Colonic mucosa (tissue), 4 donors: ENCODE measurements at regions of chr7 and their contacts with region 1.

Region 1: GRCh38 chr7:81499262-81500116 is 270.4 kb downstream of the HGF start:
- DNase-seq: no peak
- H3K4me3 ChIP-seq: no peak overlapping the region
- H3K27ac ChIP-seq: no peak overlapping the region
- H3K4me1 ChIP-seq: no peaks in the 10 kb centered on the region
- H3K27me3 ChIP-seq: no peaks in the 10 kb centered on the region
- CTCF ChIP-seq: peak; percentile 57

Region 2: DNA sequence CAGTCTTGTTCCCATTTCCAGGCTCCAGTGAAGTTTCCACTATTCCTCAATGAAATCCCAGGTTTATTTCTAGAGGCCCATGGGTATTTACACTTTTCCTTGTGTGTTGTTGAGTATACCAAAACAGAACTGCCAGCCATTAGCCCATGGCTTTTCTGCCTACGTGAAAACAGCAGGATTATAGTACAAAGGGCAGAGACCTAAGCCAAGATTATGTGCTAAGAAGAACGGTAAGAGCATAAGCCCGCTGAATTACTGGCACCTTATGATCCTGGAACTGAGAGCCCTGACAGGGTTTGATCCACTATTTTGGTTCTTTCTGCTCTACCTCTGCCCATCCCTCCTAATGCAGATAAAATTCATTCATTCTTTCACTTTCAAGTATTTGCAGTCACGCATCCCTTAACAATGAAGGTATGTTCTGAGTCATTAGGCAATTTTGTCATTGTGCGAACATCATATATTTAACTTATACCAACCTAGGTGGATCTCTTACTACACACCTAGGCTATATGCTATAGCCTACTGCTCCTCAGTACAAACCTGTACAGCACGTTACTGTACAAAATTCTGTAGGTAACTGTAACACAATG is 596.7 kb before region 1 on chr7:
- intact Hi-C with region 1: no loop called
- DNase-seq: no peak
- H3K4me3 ChIP-seq: no peak overlapping the region
- H3K27ac ChIP-seq: no peak overlapping the region
- H3K4me1 ChIP-seq: no peaks in the 10 kb centered on the region
- H3K27me3 ChIP-seq: no peaks in the 10 kb centered on the region
- CTCF ChIP-seq: no peak

Region 3: DNA sequence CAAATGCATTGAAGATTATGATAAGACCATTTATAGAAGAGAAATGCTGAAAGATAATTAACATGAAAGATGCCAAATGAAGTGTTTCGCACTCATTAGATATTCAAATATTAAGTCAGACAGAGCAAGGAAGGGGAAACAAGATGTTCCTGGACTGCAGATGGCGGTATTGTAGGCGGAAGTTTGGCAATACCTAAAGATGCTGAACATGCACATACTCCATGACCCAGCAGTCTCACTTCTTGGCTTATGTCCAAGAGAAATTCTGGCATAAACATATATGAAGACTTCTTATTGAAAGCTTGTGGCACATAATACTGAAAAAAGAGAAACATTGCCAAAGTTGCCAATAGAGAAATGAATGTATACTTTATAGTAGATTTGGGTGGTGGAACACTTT is 255.3 kb before region 1 on chr7:
- intact Hi-C with region 1: no loop called
- DNase-seq: no peak
- H3K4me3 ChIP-seq: no peak overlapping the region
- H3K27ac ChIP-seq: no peak overlapping the region
- H3K4me1 ChIP-seq: no peaks in the 10 kb centered on the region
- H3K27me3 ChIP-seq: no peaks in the 10 kb centered on the region
- CTCF ChIP-seq: no peak

Region 4: GRCh38 chr7:81684513-81685269 is 185.2 kb after region 1 on chr7:
- intact Hi-C with region 1: no loop called
- DNase-seq: peak; percentile 75
- H3K4me3 ChIP-seq: no peak overlapping the region
- H3K27ac ChIP-seq: no peak overlapping the region
- H3K4me1 ChIP-seq: no peaks in the 10 kb centered on the region
- H3K27me3 ChIP-seq: no peaks in the 10 kb centered on the region
- CTCF ChIP-seq: no peak

Region 5: GRCh38 chr7:81956520-81956919 is 457.0 kb after region 1 on chr7:
- intact Hi-C with region 1: loop called (anchors 5 kb)
- DNase-seq: no peak
- H3K4me3 ChIP-seq: no peak overlapping the region
- H3K27ac ChIP-seq: no peak overlapping the region
- H3K4me1 ChIP-seq: no peaks in the 10 kb centered on the region
- H3K27me3 ChIP-seq: no peaks in the 10 kb centered on the region
- CTCF ChIP-seq: no peak

Region 6: DNA sequence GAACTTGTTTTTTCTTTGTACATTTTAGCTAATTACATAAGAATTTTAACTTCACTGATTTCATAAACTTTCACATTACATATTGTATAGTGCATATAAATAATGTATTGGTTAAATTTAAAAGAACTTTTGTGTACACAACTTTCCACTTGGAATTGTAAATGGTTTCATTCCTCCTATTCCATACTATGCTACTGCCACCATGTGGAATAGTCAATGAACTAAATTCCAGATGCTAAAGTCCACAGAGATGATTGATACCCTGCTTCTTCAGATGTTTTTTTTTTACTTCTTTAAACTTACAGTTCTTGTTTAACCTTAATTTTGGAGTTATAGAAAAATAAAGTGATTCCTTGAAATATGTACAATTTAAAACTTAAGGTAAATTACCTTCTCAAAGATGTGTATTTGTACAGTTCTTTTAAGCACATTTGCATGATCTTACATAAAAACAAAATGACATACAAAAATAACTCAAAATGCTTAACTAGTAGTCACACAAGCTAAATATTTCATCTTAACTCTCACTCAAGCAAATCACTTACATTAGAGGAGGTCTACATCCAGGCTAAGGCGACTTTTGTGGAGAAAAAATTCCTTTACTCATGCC is 518.0 kb after region 1 on chr7:
- intact Hi-C with region 1: loop called (anchors 5 kb)
- DNase-seq: no peak
- H3K4me3 ChIP-seq: no peak overlapping the region
- H3K27ac ChIP-seq: no peak overlapping the region
- H3K4me1 ChIP-seq: no peaks in the 10 kb centered on the region
- H3K27me3 ChIP-seq: no peaks in the 10 kb centered on the region
- CTCF ChIP-seq: peak; percentile 30